Naive thymus-derived CD4-positive, alpha-beta T cell (primary cell): ENCODE measurements at regions of chr11 and their contacts with region 1.

Region 1: DNA sequence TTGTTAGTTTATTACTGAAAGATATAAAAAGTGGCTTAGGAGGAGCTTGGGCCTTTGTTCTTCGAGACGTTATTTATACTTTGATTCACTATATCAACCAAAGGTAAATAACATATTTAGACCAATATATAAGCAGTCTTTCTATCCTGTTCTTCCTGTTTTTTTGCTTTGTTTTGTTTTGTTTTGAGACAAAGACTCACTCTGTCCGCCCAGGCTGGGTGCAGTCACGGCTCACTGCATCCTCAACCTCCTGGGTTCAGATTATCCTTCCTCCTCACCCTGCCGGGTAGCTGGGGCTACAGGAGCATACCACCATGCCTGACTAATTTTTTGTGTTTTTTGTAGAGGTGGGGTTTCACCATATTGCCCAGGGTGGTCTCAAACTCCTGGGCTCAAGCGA is 66.8 kb downstream of the ATM start:
- DNase-seq: no peak
- ATAC-seq: no peak
- H3K4me3 ChIP-seq: no peak overlapping the region
- H3K4me3 Mint-ChIP-seq: peak overlapping the region in 1 of 10 donors; percentile 21
- H3K27ac ChIP-seq: no peak overlapping the region
- H3K27ac Mint-ChIP-seq: peak overlapping the region in 8 of 9 donors; percentile 23 to 85 (median 70)
- H3K4me1 ChIP-seq: no peaks in the 10 kb centered on the region
- H3K4me1 Mint-ChIP-seq: peaks cover 0 to 44% (median 23%) of the 10 kb centered on the region in 7 donors
- H3K27me3 ChIP-seq: no peaks in the 10 kb centered on the region
- H3K27me3 Mint-ChIP-seq: no peaks in the 10 kb centered on the region

Region 2: GRCh38 chr11:108135845-108136544 is 153.7 kb before region 1 on chr11:
- CTCF ChIA-PET with region 1: no interaction called
- POLR2A ChIA-PET with region 1: no interaction called
- intact Hi-C with region 1: no loop called
- DNase-seq: peak in 6 of 9 donors; percentile 11 to 38 (median 29)
- ATAC-seq: peak; percentile 54
- H3K4me3 ChIP-seq: no peak overlapping the region
- H3K4me3 Mint-ChIP-seq: no peak overlapping the region
- H3K27ac ChIP-seq: no peak overlapping the region
- H3K27ac Mint-ChIP-seq: peak overlapping the region in 6 of 9 donors; percentile 16 to 72 (median 43)
- H3K4me1 ChIP-seq: no peaks in the 10 kb centered on the region
- H3K4me1 Mint-ChIP-seq: peaks cover 0 to 20% (median 11%) of the 10 kb centered on the region in 7 donors
- H3K27me3 ChIP-seq: no peaks in the 10 kb centered on the region
- H3K27me3 Mint-ChIP-seq: no peaks in the 10 kb centered on the region

Region 3: DNA sequence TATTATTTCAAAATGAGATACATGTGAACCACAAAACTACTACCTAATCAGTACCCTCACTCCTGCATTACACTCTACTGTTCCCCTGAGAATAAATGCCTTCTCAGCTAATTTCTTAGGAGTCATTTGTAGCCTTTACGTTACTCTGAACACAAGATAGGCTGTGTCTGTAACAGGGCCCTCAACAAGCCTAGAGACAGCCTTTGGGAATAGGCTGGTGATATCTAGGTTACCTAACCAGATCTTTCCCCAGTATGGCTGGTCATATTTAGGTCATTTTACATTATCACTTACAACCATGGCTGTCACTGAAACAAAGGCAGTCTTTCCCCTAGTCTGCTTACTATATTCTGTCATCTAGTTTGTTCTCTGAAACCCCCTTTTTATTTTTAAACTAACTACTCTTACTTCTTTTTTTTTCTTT is 52.6 kb before region 1 on chr11:
- CTCF ChIA-PET with region 1: no interaction called
- POLR2A ChIA-PET with region 1: interaction called, 14 read pairs
- intact Hi-C with region 1: no loop called
- DNase-seq: peak in 4 of 9 donors; percentile 31 to 63 (median 50)
- ATAC-seq: peak; percentile 51
- H3K4me3 ChIP-seq: peak overlapping the region; percentile 50
- H3K4me3 Mint-ChIP-seq: peak overlapping the region in 9 of 10 donors; percentile 54 to 89 (median 82)
- H3K27ac ChIP-seq: peak overlapping the region; percentile 74
- H3K27ac Mint-ChIP-seq: peak overlapping the region in 7 of 9 donors; percentile 81 to 97 (median 95)
- H3K4me1 ChIP-seq: peaks cover 75 to 94% of the 10 kb centered on the region in 2 donors
- H3K4me1 Mint-ChIP-seq: peaks cover 53 to 95% (median 79%) of the 10 kb centered on the region in 7 donors
- H3K27me3 ChIP-seq: no peaks in the 10 kb centered on the region
- H3K27me3 Mint-ChIP-seq: no peaks in the 10 kb centered on the region

Region 4: DNA sequence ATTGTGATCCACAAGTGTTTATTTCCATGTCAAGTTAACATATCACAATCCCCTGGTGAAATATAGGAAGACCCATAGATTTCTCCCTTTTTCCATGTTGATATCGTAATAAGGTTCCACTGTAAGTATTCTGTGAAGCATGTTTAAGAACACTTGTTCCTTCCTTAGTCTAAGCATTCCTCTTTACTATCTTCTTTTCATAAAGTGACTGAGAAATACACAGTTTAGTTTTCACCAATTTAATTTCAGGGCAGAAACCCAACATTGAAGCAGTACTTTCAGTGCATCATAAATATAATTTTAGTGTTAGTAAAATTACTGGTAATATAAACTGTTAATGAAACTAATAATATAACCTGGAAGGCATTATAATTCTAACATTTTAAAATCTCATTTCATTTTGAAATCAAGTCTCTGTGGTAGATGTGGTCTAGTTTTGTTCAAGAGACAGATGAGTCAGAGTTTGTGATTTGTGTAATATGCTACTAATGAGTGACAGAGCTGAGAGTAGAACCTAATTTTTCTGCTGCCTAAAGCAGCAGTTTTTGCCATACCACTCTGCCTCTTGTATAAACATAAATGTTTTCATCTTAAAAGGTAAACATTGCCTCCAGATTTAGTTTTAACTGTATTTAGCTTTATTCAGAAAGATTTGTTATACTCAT is 12.6 kb after region 1 on chr11:
- CTCF ChIA-PET with region 1: no interaction called
- POLR2A ChIA-PET with region 1: interaction called, 6 read pairs
- intact Hi-C with region 1: loop called in 1 of 2 experiments (anchors 2 kb)
- DNase-seq: no peak
- ATAC-seq: no peak
- H3K4me3 ChIP-seq: no peak overlapping the region
- H3K4me3 Mint-ChIP-seq: no peak overlapping the region
- H3K27ac ChIP-seq: no peak overlapping the region
- H3K27ac Mint-ChIP-seq: peak overlapping the region in 8 of 9 donors; percentile 36 to 82 (median 67)
- H3K4me1 ChIP-seq: no peaks in the 10 kb centered on the region
- H3K4me1 Mint-ChIP-seq: peaks cover 0 to 63% (median 38%) of the 10 kb centered on the region in 7 donors
- H3K27me3 ChIP-seq: no peaks in the 10 kb centered on the region
- H3K27me3 Mint-ChIP-seq: no peaks in the 10 kb centered on the region

Region 5: DNA sequence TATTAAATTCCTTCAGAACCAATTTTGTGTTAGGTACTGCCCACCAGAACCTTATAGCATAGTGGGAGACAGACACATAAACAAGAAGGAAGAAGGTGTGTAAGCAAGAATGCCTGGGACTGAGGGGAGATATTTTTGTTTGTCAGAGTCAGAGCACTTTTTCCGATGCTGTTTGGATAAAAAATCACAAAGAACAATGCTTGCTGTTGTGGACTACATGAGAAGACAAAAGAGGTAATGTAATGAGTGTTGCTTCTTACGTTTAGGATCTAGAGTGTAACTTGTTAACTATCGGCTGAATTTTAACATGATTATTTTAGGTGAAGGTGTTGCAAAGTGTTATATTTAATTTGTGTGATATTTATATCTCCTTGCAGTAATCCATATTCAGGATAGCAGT is 18.1 kb after region 1 on chr11:
- CTCF ChIA-PET with region 1: no interaction called
- POLR2A ChIA-PET with region 1: no interaction called
- intact Hi-C with region 1: loop called in 1 of 2 experiments (anchors 2 kb)
- DNase-seq: no peak
- ATAC-seq: no peak
- H3K4me3 ChIP-seq: no peak overlapping the region
- H3K4me3 Mint-ChIP-seq: peak overlapping the region in 1 of 10 donors; percentile 5
- H3K27ac ChIP-seq: no peak overlapping the region
- H3K27ac Mint-ChIP-seq: peak overlapping the region in 8 of 9 donors; percentile 4 to 88 (median 62)
- H3K4me1 ChIP-seq: no peaks in the 10 kb centered on the region
- H3K4me1 Mint-ChIP-seq: peaks cover 3 to 66% (median 48%) of the 10 kb centered on the region in 7 donors
- H3K27me3 ChIP-seq: no peaks in the 10 kb centered on the region
- H3K27me3 Mint-ChIP-seq: no peaks in the 10 kb centered on the region

Region 6: DNA sequence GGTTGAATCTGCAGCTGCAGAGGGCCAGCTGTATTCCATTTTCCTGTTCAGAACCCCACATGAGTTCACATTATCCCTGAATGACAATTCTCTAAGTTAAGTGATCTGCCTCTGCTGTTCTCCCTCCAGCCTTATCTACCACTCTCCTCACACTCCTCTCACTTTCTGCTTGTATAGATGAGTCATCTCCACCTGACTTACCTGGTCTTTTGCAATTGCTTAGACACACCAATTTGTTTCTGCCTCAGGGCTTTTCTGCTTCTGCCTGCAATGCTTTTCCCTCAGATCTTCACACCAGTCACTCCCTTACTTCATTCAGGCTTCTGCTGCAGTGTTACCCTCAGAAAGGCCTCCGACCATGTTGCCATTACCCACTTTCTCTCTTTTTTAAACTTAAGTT is 51.3 kb after region 1 on chr11:
- CTCF ChIA-PET with region 1: no interaction called
- POLR2A ChIA-PET with region 1: no interaction called
- intact Hi-C with region 1: loop called in 1 of 2 experiments (anchors 10 kb)
- DNase-seq: no peak
- ATAC-seq: no peak
- H3K4me3 ChIP-seq: no peak overlapping the region
- H3K4me3 Mint-ChIP-seq: no peak overlapping the region
- H3K27ac ChIP-seq: no peak overlapping the region
- H3K27ac Mint-ChIP-seq: peak overlapping the region in 5 of 9 donors; percentile 1 to 59 (median 22)
- H3K4me1 ChIP-seq: no peaks in the 10 kb centered on the region
- H3K4me1 Mint-ChIP-seq: peaks cover 9 to 48% (median 29%) of the 10 kb centered on the region in 7 donors
- H3K27me3 ChIP-seq: no peaks in the 10 kb centered on the region
- H3K27me3 Mint-ChIP-seq: no peaks in the 10 kb centered on the region